ENCODE measurements at regions of chr14 and their contacts with region 1.

Region 1: DNA sequence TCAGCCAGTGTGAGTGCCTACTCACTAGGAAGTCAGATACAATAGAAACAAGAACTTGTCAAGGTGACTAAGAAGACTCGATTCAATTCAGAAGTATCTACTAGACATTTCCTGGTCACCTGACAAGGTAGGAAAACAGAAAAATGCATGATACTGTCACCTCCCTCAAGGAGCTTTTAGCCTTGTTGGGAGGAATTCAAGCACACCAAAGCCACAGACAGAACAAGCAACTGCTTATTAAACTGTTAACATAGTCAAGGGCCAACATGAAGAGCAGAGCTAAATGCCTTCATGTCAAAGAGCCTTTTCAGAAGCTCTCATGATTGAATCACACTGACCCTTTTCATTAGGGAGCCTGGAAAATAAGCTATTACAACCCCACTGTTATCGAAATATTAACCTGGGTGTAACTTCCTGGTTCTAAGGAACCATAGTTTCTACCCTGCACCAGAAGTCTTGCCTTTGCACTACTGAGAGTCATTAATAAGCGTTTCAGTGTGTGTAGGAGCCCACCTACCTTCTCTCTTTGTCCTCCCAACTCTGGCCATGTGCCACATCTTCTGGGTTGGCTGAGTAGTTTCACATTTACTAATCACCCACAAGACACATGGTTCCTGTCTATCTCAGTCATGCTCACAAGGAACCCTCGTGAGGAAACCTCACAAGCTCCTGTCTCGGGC is 31.0 kb upstream of the LGALS3 start:
- DNase-seq: no peak
- ATAC-seq: no peak
- H3K4me3 ChIP-seq: no peak overlapping the region
- H3K27ac ChIP-seq: peak overlapping the region; percentile 41; the same call in 1 of the 2 replicates
- H3K4me1 ChIP-seq: peaks cover 18% of the 10 kb centered on the region
- H3K27me3 ChIP-seq: no peaks in the 10 kb centered on the region
- CTCF ChIP-seq: no peak

Region 2: GRCh38 chr14:54893151-54893760 is 204.8 kb before region 1 on chr14:
- CTCF ChIA-PET with region 1: no interaction called
- POLR2A ChIA-PET with region 1: no interaction called
- in situ Hi-C with region 1: no loop called
- intact Hi-C with region 1: no loop called
- DNase-seq: no peak
- ATAC-seq: peak; percentile 70
- H3K4me3 ChIP-seq: no peak overlapping the region
- H3K27ac ChIP-seq: no peak overlapping the region
- H3K4me1 ChIP-seq: no peaks in the 10 kb centered on the region
- H3K27me3 ChIP-seq: no peaks in the 10 kb centered on the region
- CTCF ChIP-seq: peak; percentile 73

Region 3: GRCh38 chr14:55129428-55130195 is 31.6 kb after region 1 on chr14:
- CTCF ChIA-PET with region 1: no interaction called
- POLR2A ChIA-PET with region 1: no interaction called
- in situ Hi-C with region 1: no loop called
- intact Hi-C with region 1: loop called (anchors 5 kb)
- DNase-seq: no peak
- ATAC-seq: peak; percentile 82
- H3K4me3 ChIP-seq: peak overlapping the region; percentile 74 to 85
- H3K27ac ChIP-seq: peak overlapping the region; percentile 63
- H3K4me1 ChIP-seq: peaks cover 40% of the 10 kb centered on the region
- H3K27me3 ChIP-seq: no peaks in the 10 kb centered on the region
- CTCF ChIP-seq: no peak

Region 4: DNA sequence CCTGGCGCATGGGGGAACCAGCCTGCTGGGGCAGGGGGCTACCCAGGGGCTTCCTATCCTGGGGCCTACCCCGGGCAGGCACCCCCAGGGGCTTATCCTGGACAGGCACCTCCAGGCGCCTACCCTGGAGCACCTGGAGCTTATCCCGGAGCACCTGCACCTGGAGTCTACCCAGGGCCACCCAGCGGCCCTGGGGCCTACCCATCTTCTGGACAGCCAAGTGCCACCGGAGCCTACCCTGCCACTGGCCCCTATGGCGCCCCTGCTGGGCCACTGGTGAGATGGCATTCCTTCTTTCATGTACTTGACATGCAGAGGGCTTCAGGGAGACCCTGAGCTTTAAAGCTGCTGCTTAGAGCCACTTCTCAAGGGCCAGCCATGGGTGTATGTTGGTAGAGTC is 40.1 kb after region 1 on chr14:
- CTCF ChIA-PET with region 1: no interaction called
- POLR2A ChIA-PET with region 1: interaction called, 13 read pairs
- in situ Hi-C with region 1: no loop called
- intact Hi-C with region 1: loop called (anchors 5 kb)
- DNase-seq: no peak
- ATAC-seq: no peak
- H3K4me3 ChIP-seq: no peak overlapping the region
- H3K27ac ChIP-seq: no peak overlapping the region
- H3K4me1 ChIP-seq: peaks cover 7% of the 10 kb centered on the region; the same call in 1 of the 2 replicates
- H3K27me3 ChIP-seq: no peaks in the 10 kb centered on the region
- CTCF ChIP-seq: peak; percentile 38

Region 5: GRCh38 chr14:55789430-55789829 is 691.4 kb after region 1 on chr14:
- CTCF ChIA-PET with region 1: no interaction called
- POLR2A ChIA-PET with region 1: no interaction called
- in situ Hi-C with region 1: no loop called
- intact Hi-C with region 1: no loop called
- DNase-seq: no peak
- ATAC-seq: no peak
- H3K4me3 ChIP-seq: no peak overlapping the region
- H3K27ac ChIP-seq: no peak overlapping the region
- H3K4me1 ChIP-seq: no peaks in the 10 kb centered on the region; the same call in 1 of the 2 replicates
- H3K27me3 ChIP-seq: no peaks in the 10 kb centered on the region
- CTCF ChIP-seq: no peak

Measured in Panc1 (cell line).